MCF 10A (cell line): ENCODE measurements at regions of chr19 and their contacts with region 1.

Region 1: DNA sequence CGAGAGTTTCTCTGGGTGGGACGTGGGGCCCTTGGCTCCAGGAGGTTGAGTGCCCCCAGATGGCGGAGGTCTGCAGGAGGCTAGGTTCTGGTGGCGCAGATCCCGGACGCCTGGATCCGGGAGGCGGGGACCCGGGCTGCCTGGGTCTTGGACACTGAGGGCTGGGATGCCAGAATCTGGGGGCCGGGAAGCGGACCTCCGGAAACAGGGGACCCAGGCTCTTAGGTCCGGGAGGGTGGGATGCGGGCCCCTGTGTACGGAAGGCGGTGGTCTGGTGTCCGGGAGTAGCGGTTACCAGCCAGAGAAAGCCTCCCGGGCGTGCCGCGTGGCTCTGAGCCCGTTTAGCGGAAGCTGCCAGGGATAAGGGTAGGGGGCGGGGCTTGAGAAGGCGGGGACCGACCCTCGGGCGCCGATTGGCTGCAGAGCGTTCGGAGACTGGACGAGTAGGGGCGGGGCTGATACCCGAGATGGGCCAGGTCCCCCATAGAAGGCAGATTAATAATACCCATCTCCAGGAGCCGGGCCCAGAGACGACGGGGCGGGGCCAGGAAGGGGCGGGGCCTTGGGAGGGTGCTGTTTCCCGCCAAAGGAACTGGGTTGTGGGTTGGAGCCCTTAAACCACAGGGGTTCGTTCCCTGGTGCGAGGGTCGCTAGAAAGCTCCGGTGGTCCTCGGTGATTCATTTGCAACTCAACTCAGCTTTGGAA is at the start of gene SLC1A5:
- DNase-seq: peak; percentile 99
- H3K4me3 Mint-ChIP-seq: peak within 1 kb of the TSS; percentile 93
- H3K27ac Mint-ChIP-seq: peak within 1 kb of the TSS; percentile 94
- H3K4me1 Mint-ChIP-seq: peaks cover 24% of the 10 kb centered on the region
- H3K27me3 Mint-ChIP-seq: no peaks in the 10 kb centered on the region
- CTCF ChIP-seq: no peak
- total RNA-seq, gene SLC1A5: 372 and 417 TPM in 2 replicates

Region 2: DNA sequence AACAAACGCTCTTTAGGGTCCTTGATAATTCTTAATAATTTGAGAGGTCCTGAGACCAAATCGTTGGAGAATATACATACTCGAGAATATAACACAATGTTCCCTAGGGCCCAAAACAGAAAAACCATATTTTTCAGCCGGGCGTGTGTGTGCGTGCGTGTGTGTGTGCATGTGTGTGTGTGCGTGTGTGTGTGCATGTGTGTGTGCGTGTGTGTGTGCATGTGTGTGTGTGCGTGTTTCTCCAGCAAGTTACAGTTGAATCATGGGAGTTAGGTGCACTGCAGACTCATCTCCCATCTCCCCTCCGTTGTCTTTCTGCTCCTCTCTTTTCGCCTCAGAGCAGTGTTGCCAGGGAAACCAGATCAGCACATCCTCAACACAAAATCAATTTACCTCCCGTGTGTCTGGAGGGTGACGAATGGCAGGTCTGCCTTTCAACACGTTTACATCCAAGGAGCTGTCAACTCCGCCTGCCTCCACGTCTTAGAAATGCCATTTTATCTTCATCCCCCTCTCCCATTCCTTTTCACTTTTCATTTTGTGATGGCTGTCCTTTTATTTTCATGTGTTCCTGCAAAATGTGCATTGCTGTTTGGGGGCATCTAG is 284.5 kb before region 1 on chr19:
- CTCF ChIA-PET with region 1: no interaction called
- POLR2A ChIA-PET with region 1: no interaction called
- intact Hi-C with region 1: no loop called
- DNase-seq: no peak
- H3K4me3 Mint-ChIP-seq: no peak overlapping the region
- H3K27ac Mint-ChIP-seq: no peak overlapping the region
- H3K4me1 Mint-ChIP-seq: peaks cover 6% of the 10 kb centered on the region
- H3K27me3 Mint-ChIP-seq: peaks cover 15% of the 10 kb centered on the region
- CTCF ChIP-seq: no peak

Region 3: GRCh38 chr19:46600384-46601317 is 187.8 kb before region 1 on chr19:
- CTCF ChIA-PET with region 1: no interaction called
- POLR2A ChIA-PET with region 1: interaction called, 11 read pairs
- intact Hi-C with region 1: no loop called
- DNase-seq: peak; percentile 98
- H3K4me3 Mint-ChIP-seq: peak overlapping the region; percentile 96
- H3K27ac Mint-ChIP-seq: peak overlapping the region; percentile 100
- H3K4me1 Mint-ChIP-seq: peaks cover 4% of the 10 kb centered on the region
- H3K27me3 Mint-ChIP-seq: no peaks in the 10 kb centered on the region
- CTCF ChIP-seq: no peak

Region 4: GRCh38 chr19:46746281-46747013 is 42.0 kb before region 1 on chr19 and contains the start of gene STRN4:
- CTCF ChIA-PET with region 1: interaction called, 5 read pairs
- POLR2A ChIA-PET with region 1: interaction called, 4 read pairs
- intact Hi-C with region 1: loop called (anchors 5 kb)
- DNase-seq: no peak
- H3K4me3 Mint-ChIP-seq: peak within 1 kb of the TSS; percentile 97
- H3K27ac Mint-ChIP-seq: peak within 1 kb of the TSS; percentile 88
- H3K4me1 Mint-ChIP-seq: peaks cover 19% of the 10 kb centered on the region
- H3K27me3 Mint-ChIP-seq: no peaks in the 10 kb centered on the region
- CTCF ChIP-seq: no peak
- total RNA-seq, gene STRN4: 90.1 and 92.3 TPM in 2 replicates

Region 5: GRCh38 chr19:46759817-46760333 is 28.5 kb before region 1 on chr19:
- CTCF ChIA-PET with region 1: interaction called, 26 read pairs
- POLR2A ChIA-PET with region 1: interaction called, 147 read pairs
- intact Hi-C with region 1: loop called (anchors 1 kb)
- DNase-seq: peak; percentile 68
- H3K4me3 Mint-ChIP-seq: no peak overlapping the region
- H3K27ac Mint-ChIP-seq: no peak overlapping the region
- H3K4me1 Mint-ChIP-seq: peaks cover 12% of the 10 kb centered on the region
- H3K27me3 Mint-ChIP-seq: no peaks in the 10 kb centered on the region
- CTCF ChIP-seq: no peak

Region 6: DNA sequence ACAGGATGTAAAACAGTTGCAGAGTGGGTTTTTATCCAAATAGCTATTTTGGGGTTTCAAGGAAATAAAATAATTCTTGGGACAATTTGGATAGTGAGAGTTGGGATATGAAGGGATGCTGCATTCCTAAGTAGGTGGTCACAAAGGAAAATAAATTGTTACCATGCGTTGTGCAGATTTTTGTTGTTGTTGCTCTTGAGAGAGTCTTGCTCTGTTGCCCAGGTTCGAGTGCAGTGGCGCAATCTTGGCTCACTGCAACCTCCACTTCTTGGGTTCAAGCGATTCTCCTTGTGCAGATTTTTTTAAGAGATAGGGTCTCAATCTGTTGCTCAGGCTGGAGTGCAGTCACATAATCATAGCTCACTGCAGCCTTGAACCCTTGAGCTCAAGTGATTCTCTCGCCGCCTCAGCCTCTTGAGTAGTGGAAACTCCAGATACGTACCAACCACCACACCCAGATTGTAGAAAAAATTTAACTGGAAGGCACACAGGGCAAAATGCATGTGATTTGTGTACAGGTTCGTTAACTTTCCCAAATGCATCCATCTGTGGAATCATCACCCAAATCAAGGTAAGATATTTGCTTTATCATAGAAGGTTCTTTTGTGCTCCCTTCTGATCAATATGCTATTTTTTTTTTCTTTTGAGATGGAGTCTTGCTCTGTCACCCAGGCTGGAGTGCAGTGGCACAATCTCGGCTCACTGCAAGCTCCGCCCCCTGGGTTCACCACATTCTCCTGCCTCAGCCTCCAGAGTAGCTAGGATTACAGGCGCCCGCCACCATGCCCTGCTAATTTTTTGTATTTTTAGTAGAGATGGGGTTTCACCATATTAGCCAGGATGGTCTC is 16.0 kb before region 1 on chr19:
- CTCF ChIA-PET with region 1: interaction called, 5 read pairs
- POLR2A ChIA-PET with region 1: interaction called, 147 read pairs
- intact Hi-C with region 1: no loop called
- DNase-seq: no peak
- H3K4me3 Mint-ChIP-seq: no peak overlapping the region
- H3K27ac Mint-ChIP-seq: no peak overlapping the region
- H3K4me1 Mint-ChIP-seq: no peaks in the 10 kb centered on the region
- H3K27me3 Mint-ChIP-seq: no peaks in the 10 kb centered on the region
- CTCF ChIP-seq: no peak

Region 7: GRCh38 chr19:46840136-46840942 is 51.9 kb after region 1 on chr19:
- CTCF ChIA-PET with region 1: interaction called, 21 read pairs
- POLR2A ChIA-PET with region 1: interaction called, 42 read pairs
- intact Hi-C with region 1: loop called (anchors 2 kb)
- DNase-seq: peak; percentile 71
- H3K4me3 Mint-ChIP-seq: no peak overlapping the region
- H3K27ac Mint-ChIP-seq: no peak overlapping the region
- H3K4me1 Mint-ChIP-seq: peaks cover 18% of the 10 kb centered on the region
- H3K27me3 Mint-ChIP-seq: no peaks in the 10 kb centered on the region
- CTCF ChIP-seq: peak; percentile 79

Region 8: GRCh38 chr19:46860125-46860845 is 71.9 kb after region 1 on chr19:
- CTCF ChIA-PET with region 1: no interaction called
- POLR2A ChIA-PET with region 1: interaction called, 21 read pairs
- intact Hi-C with region 1: no loop called
- DNase-seq: peak; percentile 99
- H3K4me3 Mint-ChIP-seq: no peak overlapping the region
- H3K27ac Mint-ChIP-seq: peak overlapping the region; percentile 71
- H3K4me1 Mint-ChIP-seq: peaks cover 11% of the 10 kb centered on the region
- H3K27me3 Mint-ChIP-seq: no peaks in the 10 kb centered on the region
- CTCF ChIP-seq: no peak